Colonic mucosa (tissue), 4 donors: ENCODE measurements at regions of chr21 and their contacts with region 1.

Region 1: DNA sequence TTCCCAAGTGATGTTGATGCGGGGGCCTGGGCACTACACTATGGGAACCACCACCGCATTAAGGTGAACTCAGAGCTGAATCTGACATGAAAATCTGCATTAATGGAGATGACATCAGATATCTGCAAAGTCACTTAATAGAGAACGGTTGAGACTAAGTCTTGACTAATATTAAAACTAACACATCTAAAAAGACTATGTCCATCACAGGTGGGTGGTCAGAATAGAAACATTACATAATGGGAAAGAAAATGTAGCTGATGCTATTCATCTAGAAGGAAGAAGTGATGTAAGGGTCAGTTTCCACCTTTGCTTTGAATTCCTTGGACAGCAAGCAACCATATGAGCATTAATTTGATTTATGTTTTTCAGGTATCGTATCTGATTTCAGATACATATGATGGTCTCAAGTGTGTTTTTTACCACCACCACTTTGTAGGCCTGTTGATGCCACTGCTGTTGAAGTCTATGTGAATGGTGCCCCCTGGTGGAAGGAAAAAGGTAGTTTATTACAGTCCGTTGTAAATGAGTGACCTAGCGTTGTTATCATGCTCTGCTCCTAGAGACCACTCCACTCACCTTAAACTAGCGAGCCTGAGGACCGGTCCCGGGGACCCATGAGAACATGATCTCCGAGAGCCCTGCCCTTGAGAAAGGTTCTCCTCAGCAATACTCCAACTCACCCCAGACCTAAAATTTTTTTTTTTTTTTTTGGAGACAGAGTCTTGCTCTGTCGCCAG is 73.5 kb downstream of the BACH1 start:
- DNase-seq: peak; percentile 75
- H3K4me3 ChIP-seq: no peak overlapping the region
- H3K27ac ChIP-seq: no peak overlapping the region
- H3K4me1 ChIP-seq: no peaks in the 10 kb centered on the region
- H3K27me3 ChIP-seq: no peaks in the 10 kb centered on the region
- CTCF ChIP-seq: peak; percentile 64

Region 2: DNA sequence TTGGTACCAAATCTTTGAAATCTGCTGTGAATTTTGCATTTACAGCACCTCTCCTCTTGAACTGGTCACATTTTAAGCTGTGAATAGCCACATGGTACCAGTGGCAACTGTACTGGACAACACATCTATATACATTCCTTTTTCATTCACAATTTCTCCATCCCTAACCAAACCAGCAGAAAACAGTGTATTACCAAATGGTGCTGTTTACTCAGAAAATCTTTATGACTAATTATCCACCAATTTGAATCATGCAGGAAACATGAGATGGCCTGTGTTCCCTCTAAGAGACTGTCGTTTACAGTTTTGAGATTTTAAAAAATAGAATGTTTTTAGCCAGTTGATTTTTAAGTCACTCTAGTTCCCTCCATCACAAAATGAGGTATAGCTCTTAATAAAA is 281.2 kb before region 1 on chr21:
- intact Hi-C with region 1: loop called (anchors 2 kb)
- DNase-seq: no peak
- H3K4me3 ChIP-seq: no peak overlapping the region
- H3K27ac ChIP-seq: no peak overlapping the region
- H3K4me1 ChIP-seq: no peaks in the 10 kb centered on the region
- H3K27me3 ChIP-seq: no peaks in the 10 kb centered on the region
- CTCF ChIP-seq: no peak

Region 3: DNA sequence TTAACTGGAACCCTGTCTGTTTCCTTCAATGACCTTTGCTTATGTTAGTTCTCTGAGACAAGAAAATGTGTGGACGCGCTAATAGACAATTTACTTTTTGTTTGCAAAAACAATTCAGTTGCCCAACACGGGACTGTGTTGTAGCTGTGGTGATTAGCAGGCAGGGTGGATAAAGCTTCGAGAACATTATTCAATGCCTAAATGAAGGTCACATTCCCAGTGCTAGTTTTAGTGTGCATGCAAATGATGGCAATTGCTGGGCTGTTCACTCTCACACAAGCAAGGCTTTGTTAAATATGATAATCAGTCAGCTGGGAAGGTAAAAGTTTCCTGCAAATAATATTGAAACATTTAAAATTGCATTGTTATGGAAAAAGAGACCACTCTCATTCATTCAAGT is 114.9 kb after region 1 on chr21:
- intact Hi-C with region 1: no loop called
- DNase-seq: no peak
- H3K4me3 ChIP-seq: no peak overlapping the region
- H3K27ac ChIP-seq: no peak overlapping the region
- H3K4me1 ChIP-seq: no peaks in the 10 kb centered on the region
- H3K27me3 ChIP-seq: no peaks in the 10 kb centered on the region
- CTCF ChIP-seq: no peak

Region 4: GRCh38 chr21:29557200-29557599 is 185.0 kb after region 1 on chr21:
- intact Hi-C with region 1: no loop called
- DNase-seq: no peak
- H3K4me3 ChIP-seq: no peak overlapping the region
- H3K27ac ChIP-seq: no peak overlapping the region
- H3K4me1 ChIP-seq: no peaks in the 10 kb centered on the region
- H3K27me3 ChIP-seq: no peaks in the 10 kb centered on the region
- CTCF ChIP-seq: no peak